PC-3 (cell line): ENCODE measurements at regions of chr6 and their contacts with region 1.

Region 1: DNA sequence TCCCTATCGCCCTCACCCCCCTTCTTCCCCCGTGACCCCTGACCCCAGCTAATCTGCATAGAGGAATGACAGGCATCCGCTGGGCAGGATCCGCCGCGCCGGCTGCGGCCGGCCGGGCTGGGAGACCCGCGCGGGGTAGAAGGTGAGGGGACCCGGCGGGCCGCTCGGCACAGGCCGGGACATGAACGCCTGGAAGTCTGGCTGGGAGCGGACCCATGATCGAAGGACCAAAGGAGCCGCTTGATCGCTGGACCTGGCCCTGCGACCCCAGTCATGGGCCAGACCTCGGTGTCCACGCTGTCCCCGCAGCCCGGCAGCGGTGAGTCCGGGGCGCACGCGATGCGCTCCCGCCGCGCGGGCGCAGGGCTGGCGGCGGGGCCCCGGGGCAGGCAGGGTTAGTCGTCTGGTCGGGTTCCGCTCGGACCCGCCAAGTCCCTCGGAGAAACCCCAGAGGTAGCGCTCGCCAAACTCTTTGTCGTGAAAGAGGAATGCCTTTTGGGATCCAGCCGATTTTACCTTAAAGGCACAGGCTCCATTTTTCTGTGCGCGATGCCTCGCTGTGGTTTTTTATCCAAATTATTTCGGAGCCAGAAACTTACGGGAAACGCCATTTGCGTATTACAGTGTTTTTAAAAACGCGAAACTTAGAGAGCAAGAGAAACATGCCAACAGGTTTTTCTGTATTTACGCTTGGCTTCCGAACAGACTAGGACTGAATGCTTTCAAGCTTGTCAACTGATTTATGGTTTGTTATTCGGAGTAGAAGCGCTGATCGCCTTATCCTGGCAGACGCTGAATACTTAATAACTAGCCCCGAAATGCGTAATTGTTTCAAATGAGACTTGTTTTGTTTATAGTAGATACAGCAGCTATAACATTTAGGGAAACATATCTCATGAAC is at the start of gene PHACTR2:
- DNase-seq: peak; percentile 57
- ATAC-seq: peak; percentile 67
- H3K4me3 ChIP-seq: peak within 1 kb of the TSS; percentile 93
- H3K27ac ChIP-seq: peak within 1 kb of the TSS; percentile 35
- H3K4me1 ChIP-seq: peaks cover 60% of the 10 kb centered on the region
- H3K27me3 ChIP-seq: no peaks in the 10 kb centered on the region
- CTCF ChIP-seq: no peak
- total RNA-seq, gene PHACTR2: 19.4 and 25.1 TPM in 2 replicates

Region 2: GRCh38 chr6:143478479-143479062 is 199.6 kb before region 1 on chr6:
- CTCF ChIA-PET with region 1: no interaction called
- POLR2A ChIA-PET with region 1: no interaction called
- intact Hi-C with region 1: no loop called
- DNase-seq: no peak
- ATAC-seq: no peak
- H3K4me3 ChIP-seq: no peak overlapping the region
- H3K27ac ChIP-seq: no peak overlapping the region
- H3K4me1 ChIP-seq: no peaks in the 10 kb centered on the region
- H3K27me3 ChIP-seq: no peaks in the 10 kb centered on the region
- CTCF ChIP-seq: no peak

Region 3: DNA sequence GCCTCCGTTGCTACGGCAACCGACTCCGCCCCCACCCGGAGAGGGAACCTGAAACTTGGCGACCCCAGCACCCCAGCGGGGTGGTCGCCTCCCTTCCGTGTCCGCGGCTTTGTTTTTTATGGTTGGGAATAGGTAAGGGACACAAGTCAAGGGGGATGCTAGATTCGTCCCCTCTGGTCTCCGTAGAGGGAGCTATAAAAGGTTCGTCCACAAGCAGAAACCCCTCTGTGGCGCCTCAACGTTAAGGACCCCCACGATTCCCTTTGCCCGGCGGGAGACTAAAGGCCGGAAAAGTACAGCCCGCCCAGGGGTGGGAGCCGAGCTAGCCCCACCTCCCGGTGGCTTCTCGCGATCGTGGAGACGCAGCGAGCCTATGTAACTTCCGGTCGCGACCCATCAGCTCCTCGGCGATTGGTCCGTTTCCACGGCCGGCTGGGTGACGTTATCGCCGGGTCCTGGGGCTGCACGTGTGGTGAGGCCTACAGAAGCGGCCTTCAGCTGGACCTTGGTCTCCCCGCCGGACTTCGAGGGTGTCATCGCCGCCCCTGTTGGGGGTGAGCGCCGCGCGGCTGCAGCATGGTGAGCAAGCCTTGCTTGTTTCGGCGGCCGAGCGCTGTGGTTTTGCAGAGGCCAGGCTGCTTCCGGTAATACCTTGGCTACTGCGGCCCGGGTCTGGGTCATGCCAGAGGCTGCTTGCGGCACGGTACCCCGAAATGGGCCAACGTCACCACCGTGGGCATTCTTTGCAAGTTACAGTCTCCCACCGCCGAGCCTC is 164.9 kb after region 1 on chr6 and contains the start of gene LTV1:
- CTCF ChIA-PET with region 1: no interaction called
- POLR2A ChIA-PET with region 1: no interaction called
- intact Hi-C with region 1: loop called (anchors 10 kb)
- DNase-seq: peak; percentile 92
- ATAC-seq: peak; percentile 98
- H3K4me3 ChIP-seq: peak within 1 kb of the TSS; percentile 85
- H3K27ac ChIP-seq: peak within 1 kb of the TSS; percentile 54
- H3K4me1 ChIP-seq: peaks cover 9% of the 10 kb centered on the region; the same call in 1 of the 2 replicates
- H3K27me3 ChIP-seq: no peaks in the 10 kb centered on the region
- CTCF ChIP-seq: no peak
- total RNA-seq, gene LTV1: 20.7 and 25.1 TPM in 2 replicates

Region 4: DNA sequence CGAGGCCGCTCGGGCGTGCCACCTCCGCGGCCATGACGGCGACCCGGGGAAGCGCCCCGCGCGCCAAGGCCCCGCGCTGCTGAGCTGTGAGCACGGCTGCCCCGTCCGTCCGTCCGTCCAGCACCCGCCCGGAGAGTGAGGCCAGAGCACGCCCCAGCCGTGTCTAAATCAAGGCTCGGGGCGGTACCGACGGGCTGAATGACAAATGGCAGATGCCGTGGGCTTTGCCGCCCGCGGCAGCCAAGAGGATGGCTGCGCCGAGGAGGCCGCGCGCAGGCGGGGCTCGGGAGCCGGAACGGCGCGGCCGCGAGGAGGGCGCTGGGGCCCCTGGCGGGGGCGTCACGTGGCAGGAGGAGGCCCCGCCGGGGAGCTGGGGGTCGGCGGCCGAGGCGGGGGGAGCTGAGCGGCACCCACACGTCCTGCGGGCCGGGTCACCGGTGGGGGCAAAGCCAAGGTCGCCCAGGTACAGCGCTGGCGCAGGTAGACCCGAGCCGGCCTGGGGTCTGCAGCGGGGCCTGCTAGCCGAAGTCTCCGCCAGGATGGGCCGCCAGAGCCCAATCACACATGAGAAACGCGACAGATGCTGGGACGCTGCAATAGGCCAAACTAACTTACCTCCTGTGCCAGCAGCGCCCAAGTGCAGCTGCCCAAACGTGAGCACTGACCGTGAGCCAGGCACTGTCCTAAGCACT is 330.1 kb after region 1 on chr6 and contains the start of gene PLAGL1:
- CTCF ChIA-PET with region 1: no interaction called
- POLR2A ChIA-PET with region 1: no interaction called
- intact Hi-C with region 1: loop called (anchors 10 kb)
- DNase-seq: peak; percentile 70
- ATAC-seq: peak; percentile 90
- H3K4me3 ChIP-seq: peak within 1 kb of the TSS; percentile 90
- H3K27ac ChIP-seq: peak within 1 kb of the TSS; percentile 58
- H3K4me1 ChIP-seq: peaks cover 16% of the 10 kb centered on the region
- H3K27me3 ChIP-seq: no peaks in the 10 kb centered on the region
- CTCF ChIP-seq: no peak
- total RNA-seq, gene PLAGL1: 10.9 and 14.4 TPM in 2 replicates